ENCODE measurements at regions of chr18 and their contacts with region 1.

Region 1: DNA sequence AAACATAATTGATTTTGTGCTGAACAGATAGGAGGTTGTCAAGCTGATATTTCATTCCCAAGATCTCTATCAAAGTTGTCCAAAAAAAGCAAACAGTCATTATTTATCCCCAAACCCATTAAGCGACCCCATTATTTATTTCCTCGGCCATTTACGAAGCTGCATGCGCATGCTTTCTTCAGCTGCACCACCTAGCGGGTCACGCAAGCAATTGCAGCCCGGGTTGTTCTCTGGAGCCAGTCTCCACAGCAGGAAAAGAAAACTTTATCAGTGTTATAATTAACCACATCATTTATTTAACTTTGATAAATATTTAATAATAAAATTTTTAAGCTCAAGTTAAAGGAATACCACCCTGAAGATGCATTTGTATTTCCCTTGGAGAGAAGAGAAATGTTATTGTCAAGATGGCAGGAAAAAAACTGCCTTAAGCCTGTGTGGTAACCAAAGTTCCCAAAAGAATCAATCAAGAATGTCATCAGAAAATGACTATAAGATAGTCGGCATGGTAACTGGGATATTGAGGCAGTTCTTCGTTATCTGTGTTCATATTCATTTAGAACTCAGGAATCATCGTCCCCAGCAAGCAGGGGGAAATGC is 304.7 kb downstream of the FBXO15 start:
- DNase-seq: peak; percentile 39 to 92 (median 62)

Region 2: GRCh38 chr18:72768681-72769229 is 1074.1 kb before region 1 on chr18:
- intact Hi-C with region 1: loop called (anchors 5 kb)
- DNase-seq: no peak